WTC11 (cell line): ENCODE measurements at regions of chr12 and their contacts with region 1.

Region 1: DNA sequence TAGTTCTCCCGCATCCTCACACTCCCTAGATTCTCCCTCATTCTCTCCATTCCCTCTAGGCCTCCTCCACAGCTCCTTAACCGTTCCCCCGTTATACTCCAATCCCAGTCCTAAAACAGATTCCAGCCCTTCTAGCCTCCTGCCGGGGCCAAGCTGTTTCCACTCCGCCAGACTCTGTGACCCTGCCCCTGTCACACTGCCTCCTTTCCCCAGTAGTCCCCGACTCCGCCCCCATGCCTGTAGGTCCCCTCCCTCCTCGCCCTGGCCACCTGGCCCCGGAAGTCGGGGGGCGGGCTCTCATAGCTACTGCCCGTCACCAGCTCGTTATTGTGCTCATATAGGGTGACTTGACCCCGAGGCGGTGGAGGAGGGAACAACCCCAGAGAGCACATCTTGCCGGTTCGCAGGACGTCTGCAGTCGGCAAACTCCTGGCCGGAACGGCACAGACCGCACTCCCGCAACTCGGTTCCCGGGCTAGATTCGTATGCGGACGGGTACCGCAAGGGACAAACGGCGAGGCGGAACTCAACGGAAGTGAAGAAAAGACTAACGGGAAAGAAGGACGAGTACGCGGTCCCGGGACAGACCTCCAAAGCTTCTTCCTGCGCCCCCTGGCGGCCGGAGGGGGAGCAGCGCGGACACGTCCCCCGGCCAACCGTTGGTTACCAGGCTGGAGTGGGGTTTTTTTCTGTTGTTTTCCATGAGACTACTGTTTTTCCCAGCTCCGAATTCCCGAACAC is at the start of gene AAAS:
- DNase-seq: peak; percentile 96
- ATAC-seq: peak; percentile 85
- H3K4me3 Mint-ChIP-seq: peak within 1 kb of the TSS; percentile 96
- H3K27ac Mint-ChIP-seq: peak within 1 kb of the TSS; percentile 99
- H3K4me1 Mint-ChIP-seq: peaks cover 26% of the 10 kb centered on the region
- H3K27me3 Mint-ChIP-seq: peaks cover 37% of the 10 kb centered on the region
- CTCF ChIP-seq: peak; percentile 98
- total RNA-seq, gene AAAS: 95.8 to 104 TPM (median 98.9 TPM) in 3 replicates

Region 2: DNA sequence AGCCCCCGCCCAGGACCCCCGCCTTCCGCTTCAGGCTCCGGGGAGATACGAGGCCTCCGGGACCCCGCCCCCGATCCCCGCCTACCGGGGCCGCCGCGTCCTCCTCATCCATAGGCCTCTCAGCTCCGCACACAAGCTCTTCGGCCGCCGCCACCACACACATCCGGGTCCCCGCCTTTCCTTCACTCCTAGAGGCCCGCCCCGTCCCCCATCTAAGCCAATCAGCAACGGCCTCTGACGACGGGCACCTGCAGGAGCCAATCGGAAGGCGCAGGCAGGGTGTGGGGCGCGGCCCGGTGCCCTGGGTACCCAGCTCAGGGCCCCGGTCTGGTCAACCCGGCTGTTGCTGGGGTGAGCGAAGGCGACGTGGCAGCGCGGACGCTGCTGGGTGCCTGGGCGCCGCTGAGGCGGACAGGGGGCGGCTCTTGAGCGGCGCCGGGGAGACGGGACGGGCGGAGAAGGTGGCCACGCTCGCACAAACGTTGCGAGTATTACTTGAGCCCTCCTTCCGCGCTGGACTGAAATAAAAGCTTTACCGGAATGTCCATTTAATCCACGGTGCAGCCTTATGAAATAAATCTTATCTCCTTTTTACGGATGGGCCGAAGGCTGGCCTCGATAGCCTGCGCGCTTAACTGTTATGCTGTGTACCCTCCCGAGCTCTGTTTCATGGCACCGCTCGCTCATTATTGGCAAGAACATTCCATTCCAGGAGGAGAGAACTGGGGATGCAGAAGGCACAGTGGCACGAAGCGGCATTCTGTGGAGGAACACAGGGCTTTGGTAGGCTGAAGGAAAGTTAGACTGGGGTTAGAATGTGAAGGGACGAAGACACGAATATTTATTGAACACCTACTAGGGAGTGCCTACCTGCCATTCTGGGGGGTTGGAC is 241.8 kb before region 1 on chr12 and contains the start of gene SPRYD3:
- CTCF ChIA-PET with region 1: interaction called, 17 read pairs
- POLR2A ChIA-PET with region 1: no interaction called
- DNase-seq: peak; percentile 98
- ATAC-seq: peak; percentile 95
- H3K4me3 Mint-ChIP-seq: peak within 1 kb of the TSS; percentile 85
- H3K27ac Mint-ChIP-seq: peak within 1 kb of the TSS; percentile 95
- H3K4me1 Mint-ChIP-seq: peaks cover 13% of the 10 kb centered on the region
- H3K27me3 Mint-ChIP-seq: peaks cover 43% of the 10 kb centered on the region
- CTCF ChIP-seq: no peak
- total RNA-seq, gene SPRYD3: 6.5 to 11.9 TPM (median 6.8 TPM) in 3 replicates

Region 3: DNA sequence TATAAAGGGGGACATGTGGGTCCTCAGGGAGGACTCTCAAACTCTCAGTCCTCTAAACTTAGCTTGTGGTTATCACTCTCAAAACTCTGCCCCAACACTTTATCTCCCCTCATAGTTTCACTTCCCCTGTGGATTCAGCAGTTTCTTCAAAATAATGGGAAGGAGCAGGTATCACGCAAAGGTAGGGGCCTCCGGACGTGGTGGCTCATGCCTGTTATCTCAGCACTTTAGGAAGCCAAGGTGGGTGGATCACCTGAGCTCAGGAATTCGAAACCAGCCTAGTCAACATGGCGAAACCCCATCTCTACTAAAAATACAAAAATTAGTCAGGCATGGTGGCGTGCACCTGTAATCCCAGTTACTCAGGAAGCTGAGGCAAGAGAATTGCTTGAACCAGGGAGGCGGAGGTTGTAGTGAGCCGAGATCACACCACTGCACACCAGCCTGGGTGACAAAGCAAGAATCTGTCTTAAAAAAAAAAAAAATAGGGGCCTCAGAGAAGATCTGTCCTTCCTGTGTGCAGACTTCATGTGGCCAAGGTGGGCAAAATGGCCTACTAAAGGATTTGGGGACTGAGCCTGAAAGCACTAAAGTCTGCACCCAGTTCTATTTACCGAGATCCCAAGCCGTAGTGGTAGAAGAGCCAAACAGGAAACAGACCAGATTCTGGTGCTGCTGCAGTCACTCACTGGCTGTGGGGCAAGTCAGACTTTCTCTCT is 120.6 kb before region 1 on chr12:
- CTCF ChIA-PET with region 1: interaction called, 30 read pairs
- POLR2A ChIA-PET with region 1: no interaction called
- DNase-seq: no peak
- ATAC-seq: no peak
- H3K4me3 Mint-ChIP-seq: no peak overlapping the region
- H3K27ac Mint-ChIP-seq: no peak overlapping the region
- H3K4me1 Mint-ChIP-seq: no peaks in the 10 kb centered on the region
- H3K27me3 Mint-ChIP-seq: peaks cover 54% of the 10 kb centered on the region
- CTCF ChIP-seq: no peak

Region 4: DNA sequence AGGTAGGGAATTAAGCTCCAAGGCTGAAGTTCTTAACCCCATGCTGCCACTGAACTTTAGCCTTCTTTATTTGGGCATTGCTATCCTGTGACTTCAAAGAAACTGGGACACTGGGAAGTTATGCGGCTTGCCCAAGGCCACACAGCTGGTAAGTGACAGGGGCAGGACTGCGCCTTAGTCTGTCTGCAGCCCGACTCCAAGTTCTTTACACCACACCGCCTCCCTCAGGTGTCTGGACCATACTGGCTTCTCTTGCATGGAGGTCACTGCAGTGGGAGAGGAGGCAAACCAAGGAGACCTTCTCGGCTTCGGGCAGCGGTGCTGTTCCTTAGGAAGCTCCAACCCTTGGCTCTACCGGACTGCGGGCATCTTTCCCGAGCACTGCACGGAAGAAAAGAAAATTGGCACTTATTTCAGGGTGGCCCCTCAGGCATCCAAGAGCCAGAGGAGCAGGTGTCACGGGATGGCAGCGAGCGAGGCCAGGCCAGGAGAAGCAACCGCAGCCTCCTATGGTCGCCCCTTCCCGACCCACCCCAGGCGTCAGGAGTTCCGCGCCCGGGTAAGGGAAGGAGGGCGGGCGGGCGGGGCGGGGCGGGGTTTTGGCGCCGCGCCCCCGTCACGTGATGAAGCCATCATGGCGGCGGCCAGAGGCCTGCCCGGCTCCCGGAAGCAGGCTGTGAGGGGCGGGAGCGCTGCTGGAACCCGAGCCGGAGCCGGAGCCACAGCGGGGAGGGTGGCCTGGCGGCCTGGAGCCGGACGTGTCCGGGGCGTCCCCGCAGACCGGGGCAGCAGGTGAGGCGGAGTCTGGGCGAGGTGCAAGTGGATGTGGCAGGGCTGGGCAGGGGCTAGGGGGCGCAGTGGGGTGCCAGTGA is 69.5 kb before region 1 on chr12:
- CTCF ChIA-PET with region 1: interaction called, 10 read pairs
- POLR2A ChIA-PET with region 1: no interaction called
- DNase-seq: peak; percentile 86
- ATAC-seq: peak; percentile 87
- H3K4me3 Mint-ChIP-seq: peak overlapping the region; percentile 93
- H3K27ac Mint-ChIP-seq: peak overlapping the region; percentile 94
- H3K4me1 Mint-ChIP-seq: peaks cover 25% of the 10 kb centered on the region
- H3K27me3 Mint-ChIP-seq: no peaks in the 10 kb centered on the region
- CTCF ChIP-seq: no peak

Region 5: DNA sequence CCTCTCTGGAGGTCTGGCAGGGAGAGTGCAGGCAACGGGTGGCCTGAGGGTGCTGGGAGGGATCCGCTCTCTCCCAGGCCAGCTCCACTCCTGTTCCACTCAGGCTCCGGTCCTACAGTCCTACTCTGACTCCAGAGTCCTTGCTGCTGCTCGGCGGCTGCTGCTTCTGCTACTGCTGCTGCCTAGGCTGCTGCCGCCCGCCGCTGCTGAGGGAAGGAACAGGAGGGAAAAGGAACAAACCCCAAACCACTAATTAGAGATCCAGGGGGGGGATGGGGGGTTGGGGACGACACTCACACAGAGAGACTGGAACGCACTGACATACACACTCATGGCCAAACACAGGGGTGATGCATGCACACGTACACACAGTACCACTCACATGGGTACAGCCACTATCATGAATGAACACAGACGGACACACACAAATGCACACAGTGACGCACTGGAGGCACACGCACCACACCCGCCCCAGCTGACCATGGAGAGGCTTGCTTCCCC is 15.0 kb after region 1 on chr12 and contains the start of gene SP7:
- CTCF ChIA-PET with region 1: interaction called, 20 read pairs
- POLR2A ChIA-PET with region 1: no interaction called
- DNase-seq: no peak
- ATAC-seq: peak; percentile 21
- H3K4me3 Mint-ChIP-seq: no peak within 1 kb of the TSS
- H3K27ac Mint-ChIP-seq: no peak within 1 kb of the TSS
- H3K4me1 Mint-ChIP-seq: peaks cover 15% of the 10 kb centered on the region
- H3K27me3 Mint-ChIP-seq: peaks cover 41% of the 10 kb centered on the region
- CTCF ChIP-seq: no peak
- total RNA-seq, gene SP7: 0.09 TPM in 1 of 3 replicates, not detected in the others

Region 6: GRCh38 chr12:53424626-53425514 is 103.6 kb after region 1 on chr12:
- CTCF ChIA-PET with region 1: interaction called, 41 read pairs
- POLR2A ChIA-PET with region 1: no interaction called
- DNase-seq: no peak
- ATAC-seq: no peak
- H3K4me3 Mint-ChIP-seq: no peak overlapping the region
- H3K27ac Mint-ChIP-seq: no peak overlapping the region
- H3K4me1 Mint-ChIP-seq: peaks cover 10% of the 10 kb centered on the region
- H3K27me3 Mint-ChIP-seq: no peaks in the 10 kb centered on the region
- CTCF ChIP-seq: no peak

Region 7: DNA sequence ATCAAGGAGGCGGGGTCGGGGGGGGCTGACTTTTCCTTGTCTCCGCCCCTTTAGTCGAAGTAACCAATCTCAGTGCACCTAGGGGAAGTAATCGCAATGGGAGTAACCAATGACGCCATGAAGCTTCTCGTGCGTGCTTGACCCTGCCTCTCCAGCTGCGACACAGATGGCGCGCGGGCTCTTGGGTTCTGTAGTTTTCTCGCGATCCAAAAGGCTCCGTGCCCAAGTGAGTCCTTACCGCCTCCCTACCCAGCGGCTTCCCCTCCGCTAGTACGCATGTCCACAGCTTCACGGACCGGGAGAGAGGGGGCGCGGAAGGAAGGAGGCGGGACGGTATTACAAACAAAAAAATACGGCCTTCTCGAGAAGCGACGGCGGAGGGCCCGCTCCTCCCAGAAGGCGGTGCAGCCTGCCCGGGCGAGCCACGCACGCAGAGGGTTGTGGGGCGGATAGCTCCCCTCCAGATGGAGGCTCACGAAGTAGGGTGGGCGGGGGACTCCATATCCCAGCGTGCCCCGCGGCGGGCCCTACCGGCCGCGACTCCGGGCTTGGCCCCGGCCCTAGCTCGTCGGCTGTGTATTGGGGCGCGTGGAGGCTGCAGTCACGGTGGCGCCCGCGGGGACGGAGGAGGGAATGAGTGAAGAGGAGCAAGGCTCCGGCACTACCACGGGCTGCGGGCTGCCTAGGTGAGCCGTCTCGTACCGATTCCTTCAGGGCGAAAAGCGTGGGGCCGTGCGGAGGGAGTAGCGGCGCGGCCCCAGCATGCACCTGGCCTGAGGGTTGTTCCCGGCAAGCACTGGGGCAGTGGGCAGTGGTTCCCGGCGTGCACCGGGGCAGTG is 179.8 kb after region 1 on chr12 and contains the start of gene TARBP2:
- CTCF ChIA-PET with region 1: interaction called, 33 read pairs
- POLR2A ChIA-PET with region 1: interaction called, 8 read pairs
- DNase-seq: peak; percentile 98
- ATAC-seq: peak; percentile 74
- H3K4me3 Mint-ChIP-seq: peak within 1 kb of the TSS; percentile 86
- H3K27ac Mint-ChIP-seq: peak within 1 kb of the TSS; percentile 94
- H3K4me1 Mint-ChIP-seq: peaks cover 40% of the 10 kb centered on the region
- H3K27me3 Mint-ChIP-seq: no peaks in the 10 kb centered on the region
- CTCF ChIP-seq: no peak
- total RNA-seq, gene TARBP2: 69.0 to 74.0 TPM (median 69.1 TPM) in 3 replicates

Region 8: DNA sequence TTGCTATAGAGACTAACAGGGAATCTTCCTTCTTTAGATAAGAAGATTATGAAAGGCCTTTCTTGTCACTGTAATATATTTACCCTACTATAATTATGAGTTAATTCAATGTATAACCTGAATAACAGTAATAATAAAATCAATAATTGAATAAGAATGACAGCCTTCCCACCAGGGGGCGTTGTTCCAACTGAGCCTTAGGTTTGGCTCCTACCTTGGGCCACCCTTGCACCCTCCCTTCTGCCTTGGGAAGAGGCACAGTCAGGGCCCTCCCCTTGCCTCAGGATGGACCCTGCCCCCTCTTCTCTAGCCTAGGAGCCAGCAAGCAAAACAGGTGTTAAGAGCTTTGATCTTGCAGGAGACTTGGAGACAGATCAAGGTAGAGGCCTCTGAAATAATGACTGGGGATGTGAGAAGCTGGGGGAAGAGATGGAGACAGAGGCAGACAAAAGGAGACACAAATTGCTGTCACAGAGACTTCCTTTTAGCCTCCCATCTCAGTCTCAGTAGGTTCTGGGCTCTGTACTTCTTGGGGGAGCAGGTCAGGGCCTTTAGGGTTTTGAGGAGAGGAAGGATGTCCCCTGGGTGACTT is 470.6 kb after region 1 on chr12:
- CTCF ChIA-PET with region 1: no interaction called
- POLR2A ChIA-PET with region 1: no interaction called
- DNase-seq: peak; percentile 62
- ATAC-seq: peak; percentile 94
- H3K4me3 Mint-ChIP-seq: no peak overlapping the region
- H3K27ac Mint-ChIP-seq: no peak overlapping the region
- H3K4me1 Mint-ChIP-seq: peaks cover 11% of the 10 kb centered on the region; the same call in 1 of the 2 replicates
- H3K27me3 Mint-ChIP-seq: peaks cover 4% of the 10 kb centered on the region; the same call in 1 of the 2 replicates
- CTCF ChIP-seq: peak; percentile 69; the same call in 1 of the 2 replicates